AG04450 (cell line): ENCODE measurements at regions of chr12 and their contacts with region 1.

Region 1: GRCh38 chr12:71754461-71755145 is at the start of gene RAB21:
- DNase-seq: peak; percentile 88
- H3K4me3 ChIP-seq: peak within 1 kb of the TSS; percentile 89
- H3K27ac ChIP-seq: peak within 1 kb of the TSS; percentile 85
- H3K27me3 ChIP-seq: peaks cover 12% of the 10 kb centered on the region
- CTCF ChIP-seq: peak; percentile 34
- polyA plus RNA-seq, gene RAB21: 15.6 and 18.6 TPM in 2 replicates

Region 2: DNA sequence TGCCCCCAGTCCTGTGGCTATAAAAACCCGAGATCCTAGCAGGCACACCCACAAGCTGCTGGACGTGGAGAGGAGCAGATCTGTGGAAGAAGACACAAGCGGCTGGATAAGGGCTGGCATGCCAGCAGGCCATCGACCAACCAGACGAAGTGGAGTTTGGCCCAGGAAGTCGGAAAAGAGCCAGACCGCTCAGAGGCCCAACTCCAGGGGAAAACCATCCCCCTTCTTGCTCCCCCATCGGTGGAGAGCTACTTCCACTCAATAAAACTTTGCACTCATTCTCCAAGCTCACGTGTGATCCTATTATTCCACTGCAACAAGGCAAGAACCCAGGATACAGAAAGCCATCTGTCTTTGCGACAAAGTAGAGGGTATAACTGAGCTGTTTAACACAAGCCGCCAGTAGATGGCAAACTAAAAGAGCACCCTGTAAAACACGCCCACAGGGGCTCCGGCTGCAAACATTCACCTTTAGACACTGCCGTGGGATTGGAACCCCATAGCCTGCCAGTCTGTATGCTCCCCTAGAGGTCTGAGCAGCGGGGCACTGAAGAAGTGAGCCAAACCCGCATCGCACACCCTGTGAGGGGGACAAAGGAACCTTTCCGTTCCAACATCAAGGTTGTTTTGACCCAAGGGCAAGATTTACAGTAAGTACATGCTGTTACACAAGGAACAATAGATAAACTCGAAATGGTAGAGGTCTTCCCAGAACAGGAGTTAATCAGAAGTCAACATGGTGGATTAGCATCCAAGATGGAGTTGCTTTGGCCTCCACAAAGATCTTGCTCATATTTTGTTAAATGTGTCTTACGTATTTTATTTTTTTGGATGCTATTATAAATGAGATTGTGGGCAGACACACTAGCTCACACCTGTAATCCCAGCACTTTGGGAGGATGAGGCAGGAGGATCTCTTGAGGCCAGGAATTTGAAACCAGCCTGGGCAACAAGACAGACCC is 22.6 kb before region 1 on chr12:
- CTCF ChIA-PET with region 1: no interaction called
- POLR2A ChIA-PET with region 1: no interaction called
- DNase-seq: no peak
- H3K4me3 ChIP-seq: no peak overlapping the region
- H3K27ac ChIP-seq: peak overlapping the region; percentile 42
- H3K27me3 ChIP-seq: no peaks in the 10 kb centered on the region
- CTCF ChIP-seq: no peak

Region 3: DNA sequence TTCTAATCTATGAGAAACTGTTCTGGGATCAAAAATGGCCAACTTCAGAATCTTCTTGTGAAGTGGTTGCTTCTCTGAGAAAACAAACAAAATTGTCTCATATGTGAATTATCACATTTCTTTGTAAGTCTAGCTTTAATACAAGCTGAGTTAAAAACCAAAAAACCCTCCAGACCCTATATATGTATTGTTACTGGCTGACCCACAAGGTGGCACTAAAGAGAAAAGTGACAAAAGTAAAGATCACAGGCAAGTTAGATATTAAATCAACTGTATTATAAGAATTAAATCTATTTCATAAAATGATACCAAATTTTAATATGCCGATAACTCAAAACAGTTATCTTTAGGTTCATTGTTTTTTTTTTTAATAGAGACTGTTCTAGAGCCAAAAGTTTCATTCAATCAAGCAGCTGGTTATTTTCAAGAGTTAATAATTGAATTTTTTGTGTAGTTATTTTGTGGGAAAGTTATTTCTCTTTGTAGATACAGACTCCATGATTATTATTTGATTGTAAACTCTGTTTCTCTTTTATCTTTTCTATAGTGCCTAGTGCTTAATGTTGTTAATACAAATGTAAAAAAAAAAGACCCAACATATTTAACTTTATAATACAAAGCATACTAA is 510.1 kb after region 1 on chr12:
- CTCF ChIA-PET with region 1: interaction called, 10 read pairs
- POLR2A ChIA-PET with region 1: no interaction called
- DNase-seq: no peak
- H3K4me3 ChIP-seq: no peak overlapping the region
- H3K27ac ChIP-seq: no peak overlapping the region
- H3K27me3 ChIP-seq: no peaks in the 10 kb centered on the region
- CTCF ChIP-seq: peak; percentile 59